GM12878 (cell line): ENCODE measurements at regions of chr9 and their contacts with region 1.

Region 1: DNA sequence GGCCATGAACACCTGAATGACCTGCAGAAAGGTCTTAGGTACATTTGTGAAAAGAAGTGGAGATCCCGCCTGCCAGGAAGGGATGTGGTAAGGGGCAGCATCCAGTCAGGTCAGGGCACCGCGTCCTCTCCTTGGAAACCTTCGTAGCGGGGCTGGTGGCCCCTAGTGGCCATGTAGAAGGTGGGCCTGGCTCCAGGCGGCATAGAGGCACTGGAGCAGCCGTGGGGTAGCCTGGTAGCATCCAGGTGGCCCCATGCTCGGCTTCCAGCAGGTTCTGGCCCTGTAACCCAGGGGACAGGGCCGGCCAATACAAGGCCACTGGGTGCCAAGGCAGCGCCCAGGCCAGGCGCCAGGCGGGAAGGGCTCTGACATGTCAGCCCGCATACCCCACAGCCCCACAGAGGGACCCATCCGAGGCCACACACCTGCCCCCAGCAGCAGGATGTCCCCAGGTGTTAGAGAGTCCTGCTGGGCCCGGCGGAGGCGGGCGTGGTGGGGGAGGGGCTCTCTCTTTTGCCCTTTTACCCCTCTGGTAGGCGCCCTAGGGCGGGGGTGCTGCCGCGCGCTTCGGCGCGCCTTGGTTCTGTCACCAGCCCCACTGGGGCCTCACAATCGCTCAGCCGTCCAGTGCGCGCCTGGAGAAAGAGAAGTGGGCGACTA is 58.3 kb upstream of the SPATA31E1 start:
- DNase-seq: no peak
- ATAC-seq: no peak
- H3K4me3 ChIP-seq: no peak overlapping the region
- H3K27ac ChIP-seq: no peak overlapping the region
- H3K4me1 ChIP-seq: no peaks in the 10 kb centered on the region
- H3K27me3 ChIP-seq: peaks cover 0 to 3% of the 10 kb centered on the region in 2 experiments; a peak in 2 of 4 replicates
- CTCF ChIP-seq: no peak
- EP300 ChIP-seq: no peak
- POLR2A ChIP-seq: no peak
- RAD21 ChIP-seq: no peak

Region 2: DNA sequence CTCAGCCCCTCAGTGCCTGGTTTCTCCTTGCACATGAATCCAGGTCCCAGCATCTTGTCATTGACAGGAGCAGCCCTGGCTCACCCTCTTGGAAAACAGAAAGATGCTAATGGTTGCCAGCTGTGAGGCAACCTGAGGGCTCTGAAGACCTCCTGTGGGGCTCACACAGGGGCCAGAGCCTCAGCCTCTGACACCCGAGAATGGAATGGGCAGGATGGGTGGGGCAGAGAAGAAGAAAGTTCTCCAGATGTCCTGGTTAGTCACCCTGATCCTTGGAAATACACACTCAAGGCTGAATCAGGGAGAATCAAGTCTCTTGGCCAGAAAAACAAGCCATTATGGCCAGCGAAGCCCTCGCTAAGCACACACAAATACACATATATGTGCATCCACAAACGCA is 26.0 kb after region 1 on chr9:
- CTCF ChIA-PET with region 1: no interaction called
- POLR2A ChIA-PET with region 1: no interaction called
- RAD21 ChIA-PET with region 1: no interaction called
- SMC1A ChIA-PET with region 1: no interaction called
- in situ Hi-C with region 1: no loop called
- intact Hi-C with region 1: no loop called
- DNase-seq: no peak
- ATAC-seq: no peak
- H3K4me3 ChIP-seq: no peak overlapping the region
- H3K27ac ChIP-seq: no peak overlapping the region
- H3K4me1 ChIP-seq: no peaks in the 10 kb centered on the region
- H3K27me3 ChIP-seq: no peaks in the 10 kb centered on the region
- CTCF ChIP-seq: no peak
- EP300 ChIP-seq: no peak
- POLR2A ChIP-seq: no peak
- RAD21 ChIP-seq: no peak

Region 3: DNA sequence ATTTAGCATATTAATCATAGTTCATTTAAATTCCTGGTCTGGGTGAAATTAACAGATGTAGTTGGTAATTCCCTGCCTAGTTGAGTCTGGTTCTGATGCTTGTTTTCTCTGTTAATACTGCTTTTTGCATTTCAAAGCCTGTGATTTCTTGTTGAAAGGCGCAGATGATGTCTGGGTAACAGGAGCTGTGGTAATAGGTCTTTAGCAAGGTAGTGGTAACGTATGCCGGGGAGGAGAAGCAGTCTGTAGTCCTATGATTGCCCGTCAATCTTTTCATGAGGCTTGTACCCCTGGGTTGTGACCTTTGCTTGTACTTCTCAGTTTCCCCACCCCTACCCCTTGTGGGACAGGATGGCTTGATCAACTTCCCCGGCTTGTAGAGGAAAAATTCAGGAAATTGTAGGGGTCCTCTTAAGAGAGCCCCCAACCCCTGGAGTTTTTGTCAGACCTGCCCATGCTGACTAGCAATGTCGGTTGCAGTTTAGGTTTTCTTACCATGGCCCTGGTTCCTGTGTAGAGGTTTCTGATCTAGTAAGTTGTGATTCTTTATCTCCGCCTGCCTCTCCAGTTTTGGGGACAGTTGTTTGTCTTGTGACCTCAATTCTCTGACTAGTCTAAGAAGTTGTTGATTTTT is 619.3 kb after region 1 on chr9:
- CTCF ChIA-PET with region 1: no interaction called
- POLR2A ChIA-PET with region 1: no interaction called
- RAD21 ChIA-PET with region 1: no interaction called
- SMC1A ChIA-PET with region 1: no interaction called
- in situ Hi-C with region 1: no loop called
- intact Hi-C with region 1: loop called (anchors 10 kb)
- DNase-seq: no peak
- ATAC-seq: no peak
- H3K4me3 ChIP-seq: no peak overlapping the region
- H3K27ac ChIP-seq: no peak overlapping the region
- H3K4me1 ChIP-seq: no peaks in the 10 kb centered on the region
- H3K27me3 ChIP-seq: no peaks in the 10 kb centered on the region
- CTCF ChIP-seq: no peak
- EP300 ChIP-seq: no peak
- POLR2A ChIP-seq: no peak
- RAD21 ChIP-seq: no peak